ENCODE measurements at regions of chr7 and their contacts with region 1.

Region 1: DNA sequence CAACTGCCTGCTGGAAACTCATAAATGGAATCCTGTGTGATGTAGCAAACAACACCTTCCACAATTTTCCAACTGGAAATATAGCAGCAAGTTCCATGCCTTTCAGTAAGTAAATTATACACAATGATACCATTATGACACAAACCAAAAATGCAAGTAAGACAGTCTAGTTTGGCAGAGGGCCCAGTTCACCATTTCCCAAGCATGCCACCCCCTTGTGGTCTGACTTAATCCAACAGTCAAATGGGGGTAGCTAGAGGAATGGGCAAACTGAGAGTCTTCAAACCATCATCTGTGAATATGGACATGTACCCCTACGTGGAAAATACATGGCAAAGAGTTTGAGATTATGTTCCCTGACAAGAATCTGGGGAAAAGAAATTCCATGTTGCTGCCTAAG is 137.6 kb upstream of the VWC2 start:
- DNase-seq: no peak
- ATAC-seq: no peak
- H3K4me3 ChIP-seq: no peak overlapping the region
- H3K27ac ChIP-seq: no peak overlapping the region
- H3K4me1 ChIP-seq: peaks cover 0 to 16% (median 9%) of the 10 kb centered on the region in 12 donors
- H3K27me3 ChIP-seq: no peaks in the 10 kb centered on the region
- CTCF ChIP-seq: peak in 8 of 12 donors; percentile 4 to 37 (median 15)
- POLR2A ChIP-seq: no peak

Region 2: GRCh38 chr7:48084727-48085432 is 1550.9 kb before region 1 on chr7:
- intact Hi-C with region 1: no loop called
- DNase-seq: peak; percentile 69 to 76 (median 70)
- ATAC-seq: peak in 3 of 4 donors; percentile 18 to 52 (median 52)
- H3K4me3 ChIP-seq: no peak overlapping the region
- H3K27ac ChIP-seq: peak overlapping the region in 7 of 12 donors; percentile 18 to 99 (median 40)
- H3K4me1 ChIP-seq: peaks cover 3 to 62% (median 24%) of the 10 kb centered on the region in 12 donors
- H3K27me3 ChIP-seq: no peaks in the 10 kb centered on the region
- CTCF ChIP-seq: no peak
- POLR2A ChIP-seq: peak in 1 of 2 donors; percentile 22

Region 3: DNA sequence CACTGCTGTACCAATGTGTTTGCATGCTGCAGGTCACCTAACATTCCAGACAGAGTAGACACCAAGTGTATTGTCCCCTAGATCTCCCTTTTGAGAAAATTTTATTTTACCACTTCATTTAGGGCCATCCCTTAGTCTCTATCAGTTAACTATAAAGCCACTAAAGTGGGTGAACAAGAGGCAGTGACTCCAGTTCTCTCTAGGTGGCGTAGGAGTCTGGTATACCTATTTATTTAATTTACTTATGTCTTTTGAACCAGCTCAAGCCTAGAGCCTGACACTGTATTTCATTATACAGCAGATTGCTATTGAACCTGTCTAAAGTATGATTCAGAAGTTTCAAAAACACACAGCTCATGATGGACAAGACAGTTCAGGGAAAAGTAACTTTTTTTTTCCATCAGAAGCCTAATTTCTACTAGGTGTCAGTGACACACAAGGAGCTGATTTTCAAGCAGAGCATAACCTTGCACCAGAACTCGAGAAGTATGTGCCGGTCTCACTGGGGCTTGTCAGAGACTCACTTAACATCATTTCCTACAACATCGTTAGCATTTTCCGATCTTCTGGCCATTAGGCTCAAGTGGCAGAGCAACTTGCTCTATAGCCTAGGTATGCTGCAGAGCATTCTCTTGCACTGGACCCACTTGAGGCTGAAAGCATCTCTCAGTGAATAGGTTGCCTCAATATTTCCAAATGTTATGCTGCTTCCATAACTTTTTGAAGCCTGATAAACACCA is 536.0 kb before region 1 on chr7:
- intact Hi-C with region 1: loop called in 1 of 10 experiments (anchors 10 kb)
- DNase-seq: no peak
- ATAC-seq: no peak
- H3K4me3 ChIP-seq: no peak overlapping the region
- H3K27ac ChIP-seq: no peak overlapping the region
- H3K4me1 ChIP-seq: no peaks in the 10 kb centered on the region
- H3K27me3 ChIP-seq: no peaks in the 10 kb centered on the region
- CTCF ChIP-seq: peak in 2 of 12 donors; percentile 15 to 24
- POLR2A ChIP-seq: no peak

Region 4: DNA sequence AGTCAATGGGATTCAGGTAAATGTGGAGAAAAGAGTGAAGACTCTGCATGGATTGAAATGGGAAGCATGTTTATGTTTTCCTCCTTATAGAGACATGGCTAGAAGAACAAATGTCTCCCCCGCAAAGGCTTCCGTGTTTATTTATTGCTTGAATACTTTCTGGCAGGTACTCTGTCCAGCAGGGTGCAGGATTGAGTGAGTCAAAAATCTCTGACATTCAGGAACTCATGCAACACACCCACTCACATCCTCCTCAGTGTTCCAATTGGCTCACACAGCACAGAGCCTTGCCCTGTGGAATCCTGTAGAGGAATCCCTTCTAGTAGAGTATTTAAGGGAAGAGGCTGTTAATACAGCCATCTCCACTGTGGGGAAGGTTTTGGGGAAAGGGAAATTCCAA is 152.7 kb before region 1 on chr7:
- intact Hi-C with region 1: loop called in 6 of 10 experiments (anchors 5 to 10 kb)
- DNase-seq: peak in 3 of 5 donors; percentile 10 to 42 (median 28)
- ATAC-seq: peak in 3 of 4 donors; percentile 58 to 89 (median 86)
- H3K4me3 ChIP-seq: no peak overlapping the region
- H3K27ac ChIP-seq: no peak overlapping the region
- H3K4me1 ChIP-seq: peaks cover 0 to 6% (median 0%) of the 10 kb centered on the region in 12 donors
- H3K27me3 ChIP-seq: no peaks in the 10 kb centered on the region
- CTCF ChIP-seq: peak in 9 of 12 donors; percentile 25 to 45 (median 35)
- POLR2A ChIP-seq: no peak

Region 5: DNA sequence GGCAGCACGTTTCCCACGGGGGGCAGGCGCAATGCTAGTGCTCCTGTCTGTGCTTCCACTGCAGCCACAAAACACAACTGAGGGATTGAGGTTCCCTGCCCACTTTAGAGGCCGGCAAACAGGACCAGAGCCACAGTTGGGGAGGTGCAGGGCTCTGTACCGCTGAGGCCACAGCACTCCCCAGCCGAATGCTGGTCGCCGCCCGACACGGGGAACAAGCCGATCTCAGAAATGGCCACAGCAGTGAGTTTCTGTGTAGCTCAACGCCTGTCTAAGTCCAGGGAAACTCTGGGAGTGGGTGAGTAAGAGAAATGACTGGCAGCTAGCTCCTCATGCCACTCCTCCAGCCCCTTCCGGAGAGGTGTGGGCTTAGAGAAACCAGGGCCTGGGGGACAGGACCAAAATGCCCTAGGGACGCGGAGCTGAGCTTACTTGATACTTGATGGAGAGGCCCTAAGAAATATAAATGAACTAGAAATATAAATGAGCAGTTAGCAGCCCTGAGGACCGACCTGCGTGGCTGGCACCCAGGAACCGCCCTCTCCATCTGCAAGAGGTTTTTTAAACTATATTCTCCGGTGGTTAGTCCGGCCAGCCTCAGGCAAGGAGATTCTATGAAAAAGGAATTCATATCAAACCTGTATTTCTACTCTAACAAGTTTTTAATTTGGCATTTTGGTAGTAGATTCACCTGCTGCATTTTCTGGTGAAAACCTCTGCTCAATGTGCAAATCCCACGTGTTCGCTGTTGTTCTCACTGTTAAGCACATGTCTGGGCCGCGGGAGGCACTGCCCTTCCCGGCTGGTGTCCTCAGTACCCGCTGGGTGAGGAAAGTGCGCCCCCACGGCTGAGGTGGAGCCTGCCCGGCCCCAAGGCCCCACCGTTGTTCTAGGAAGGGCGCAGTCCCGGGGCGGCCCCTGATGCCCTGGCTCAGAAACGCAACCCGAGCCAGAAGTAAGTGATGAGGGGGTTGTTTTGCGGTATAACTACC is 56.1 kb before region 1 on chr7:
- intact Hi-C with region 1: no loop called
- DNase-seq: no peak
- ATAC-seq: peak in 1 of 4 donors; percentile 36
- H3K4me3 ChIP-seq: no peak overlapping the region
- H3K27ac ChIP-seq: no peak overlapping the region
- H3K4me1 ChIP-seq: peaks cover 0 to 4% (median 0%) of the 10 kb centered on the region in 12 donors
- H3K27me3 ChIP-seq: no peaks in the 10 kb centered on the region
- CTCF ChIP-seq: no peak
- POLR2A ChIP-seq: no peak

Region 6: DNA sequence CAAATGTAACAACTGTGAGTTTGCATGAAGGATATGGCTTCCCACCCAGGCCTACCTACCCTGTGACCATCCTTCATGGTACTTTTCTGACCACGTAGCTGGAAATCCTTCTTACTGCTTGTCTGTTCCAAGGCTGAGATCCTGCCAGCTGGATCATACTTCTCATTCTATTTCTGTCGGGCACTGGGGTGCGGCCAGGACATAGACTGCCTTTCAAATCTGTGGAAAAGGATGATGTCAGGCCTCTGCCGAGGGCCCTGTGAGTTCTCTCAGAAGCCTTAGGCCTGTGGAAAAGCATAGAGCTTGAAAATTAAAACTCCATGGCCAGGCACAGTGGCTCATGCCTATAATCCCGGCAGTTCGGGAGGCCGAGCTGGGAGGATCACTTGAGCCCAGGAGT is 147.6 kb after region 1 on chr7:
- intact Hi-C with region 1: loop called in 5 of 10 experiments (anchors 5 to 10 kb)
- DNase-seq: peak in 4 of 5 donors; percentile 77 to 89 (median 84)
- ATAC-seq: peak; percentile 96 to 98 (median 97)
- H3K4me3 ChIP-seq: no peak overlapping the region
- H3K27ac ChIP-seq: peak overlapping the region; percentile 49 to 84 (median 74)
- H3K4me1 ChIP-seq: peaks cover 0 to 55% (median 14%) of the 10 kb centered on the region in 12 donors
- H3K27me3 ChIP-seq: no peaks in the 10 kb centered on the region
- CTCF ChIP-seq: no peak
- POLR2A ChIP-seq: no peak